ENCODE measurements at regions of chr1 and their contacts with region 1.

Region 1: DNA sequence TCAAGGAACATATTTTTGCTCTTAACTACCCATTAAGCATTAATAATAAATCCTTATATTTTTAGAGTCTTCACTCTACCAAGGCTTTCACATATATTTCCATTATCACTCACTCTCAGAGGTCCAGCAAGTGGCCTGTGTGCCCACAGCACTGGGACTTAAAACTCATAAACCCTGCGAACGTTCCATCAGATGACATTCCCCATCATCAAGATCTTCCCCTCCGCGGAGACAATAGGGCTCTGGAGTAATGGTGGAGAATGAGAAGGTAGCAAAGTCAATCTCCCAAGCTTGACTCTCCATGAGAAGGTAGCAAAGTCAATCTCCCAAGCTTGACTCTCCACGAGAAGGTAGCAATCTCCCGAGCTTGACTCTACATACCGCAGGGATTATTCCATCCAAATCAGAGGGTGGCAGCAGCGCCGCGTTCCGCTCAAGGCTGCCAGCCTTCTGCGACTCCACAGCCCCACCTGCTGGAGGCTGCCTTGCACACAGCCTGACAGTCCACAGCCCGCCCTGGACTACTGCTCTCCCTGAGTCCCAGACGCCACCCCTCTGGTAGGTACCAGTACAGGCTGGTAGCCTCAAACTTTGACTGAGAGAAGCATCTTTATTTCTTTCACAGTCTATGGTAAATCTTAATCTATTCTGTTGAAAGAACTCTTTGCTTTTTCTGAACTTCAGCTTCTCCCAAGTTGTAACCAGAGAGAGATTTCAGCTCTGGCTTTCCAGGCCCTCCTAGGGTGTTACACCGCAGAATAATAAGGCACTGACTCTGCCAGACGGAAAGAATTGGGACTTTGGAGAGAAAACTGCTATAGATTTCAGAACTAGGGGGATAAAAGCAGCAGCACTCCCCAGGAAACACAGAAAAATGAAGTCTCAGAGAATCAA is 26.4 kb upstream of the CTTNBP2NL start:
- DNase-seq: peak; percentile 82 to 91 (median 88)
- H3K4me3 ChIP-seq: peak overlapping the region in 25 of 59 donors; percentile 1 to 44 (median 21)
- H3K27ac ChIP-seq: no peak overlapping the region
- H3K27me3 ChIP-seq: peaks cover 0 to 4% (median 0%) of the 10 kb centered on the region in 45 donors
- CTCF ChIP-seq: peak; percentile 79 to 99 (median 98)

Region 2: GRCh38 chr1:111789666-111790316 is 579.8 kb before region 1 on chr1:
- intact Hi-C with region 1: loop called in 1 of 2 experiments (anchors 10 kb)
- DNase-seq: no peak
- H3K4me3 ChIP-seq: no peak overlapping the region
- H3K27ac ChIP-seq: peak overlapping the region in 44 of 59 donors; percentile 7 to 89 (median 54)
- H3K27me3 ChIP-seq: no peaks in the 10 kb centered on the region
- CTCF ChIP-seq: peak in 45 of 56 donors; percentile 11 to 68 (median 34)

Measured in dorsolateral prefrontal cortex (tissue), 120 donors.